ENCODE measurements at regions of chr16 and their contacts with region 1.

Region 1: DNA sequence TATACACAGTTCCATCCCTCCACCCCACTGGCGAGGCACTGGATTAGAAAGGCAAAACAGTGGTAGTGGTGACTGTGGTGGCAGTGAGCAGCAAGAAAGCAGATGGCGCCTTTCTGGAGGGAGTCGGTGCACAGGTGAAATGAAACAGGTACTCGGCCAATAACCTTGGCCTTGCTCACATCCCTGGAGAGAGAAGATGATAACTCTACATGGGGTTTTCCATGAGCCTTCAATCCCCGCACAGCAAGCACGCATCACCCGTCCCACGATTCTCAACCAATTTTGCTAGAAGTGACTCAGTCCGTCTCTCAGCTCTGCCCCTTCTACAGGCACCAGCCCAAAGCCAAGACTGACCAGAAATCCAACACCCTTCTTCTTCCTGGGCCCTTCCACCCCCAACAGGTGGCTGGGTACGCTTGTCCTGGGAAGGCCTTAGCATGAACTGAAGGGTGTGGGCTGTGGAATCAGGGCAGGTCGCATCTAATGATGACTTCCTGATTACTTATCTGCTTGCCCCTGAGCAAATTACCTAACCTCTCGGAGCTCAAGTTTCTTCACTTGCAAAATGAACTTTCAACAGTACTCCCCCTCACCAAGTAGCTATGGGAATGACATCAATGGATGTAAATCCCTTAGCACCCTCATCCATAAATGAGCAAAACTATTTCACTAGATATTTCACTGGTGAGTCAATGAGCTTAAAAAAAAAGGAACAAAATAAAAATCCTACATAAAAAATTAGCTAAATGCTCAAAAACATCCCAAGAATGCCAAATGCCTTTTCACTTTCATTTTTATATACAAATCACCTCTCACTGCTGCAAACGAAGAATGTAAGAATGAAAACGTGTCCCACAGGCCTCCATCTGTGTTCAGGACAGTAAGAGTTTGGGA is 18.0 kb downstream of the XPO6 start:
- DNase-seq: peak; percentile 26
- H3K4me3 Mint-ChIP-seq: peak overlapping the region; percentile 76
- H3K27ac Mint-ChIP-seq: peak overlapping the region; percentile 94
- H3K4me1 Mint-ChIP-seq: peaks cover 75% of the 10 kb centered on the region
- H3K27me3 Mint-ChIP-seq: no peaks in the 10 kb centered on the region

Region 2: GRCh38 chr16:28182183-28182582 is 11.6 kb before region 1 on chr16:
- intact Hi-C with region 1: loop called (anchors 1 kb)
- DNase-seq: no peak
- H3K4me3 Mint-ChIP-seq: peak overlapping the region; percentile 49
- H3K27ac Mint-ChIP-seq: peak overlapping the region; percentile 95
- H3K4me1 Mint-ChIP-seq: peaks cover 69% of the 10 kb centered on the region
- H3K27me3 Mint-ChIP-seq: no peaks in the 10 kb centered on the region